WTC11 (cell line): ENCODE measurements at regions of chr1 and their contacts with region 1.

Region 1: GRCh38 chr1:9784508-9785133 is 39.1 kb downstream of the CLSTN1 start:
- DNase-seq: peak; percentile 63
- ATAC-seq: peak; percentile 33; the same call in 1 of the 2 replicates
- H3K4me3 Mint-ChIP-seq: no peak overlapping the region
- H3K27ac Mint-ChIP-seq: no peak overlapping the region
- H3K4me1 Mint-ChIP-seq: peaks cover 19% of the 10 kb centered on the region
- H3K27me3 Mint-ChIP-seq: no peaks in the 10 kb centered on the region
- CTCF ChIP-seq: peak; percentile 48

Region 2: DNA sequence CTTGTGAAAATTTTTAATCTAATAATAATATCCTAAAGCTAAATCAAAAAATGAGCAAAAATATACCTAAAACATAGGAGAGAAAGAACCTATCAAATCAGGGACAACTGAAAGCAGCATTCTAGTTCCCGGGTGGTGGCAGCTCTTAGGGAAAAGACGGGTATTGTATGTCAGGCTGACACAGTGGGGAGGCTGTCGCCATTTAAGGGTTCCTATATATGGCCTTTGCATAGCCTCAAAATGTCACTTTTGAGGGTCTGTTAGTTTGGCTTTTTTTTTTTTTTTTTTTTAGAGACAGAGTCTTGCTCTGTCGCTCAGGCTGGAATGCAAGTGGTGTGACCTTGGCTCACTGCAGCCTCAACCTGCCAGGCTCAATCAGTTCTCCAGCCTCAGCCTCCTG is 33.1 kb after region 1 on chr1:
- CTCF ChIA-PET with region 1: interaction called, 14 read pairs
- POLR2A ChIA-PET with region 1: no interaction called
- DNase-seq: no peak
- ATAC-seq: no peak
- H3K4me3 Mint-ChIP-seq: no peak overlapping the region
- H3K27ac Mint-ChIP-seq: no peak overlapping the region
- H3K4me1 Mint-ChIP-seq: peaks cover 47% of the 10 kb centered on the region
- H3K27me3 Mint-ChIP-seq: 0 out of 2 replicates have a peak, but pooled peaks cover 5% of the 10 kb centered on the region
- CTCF ChIP-seq: no peak

Region 3: DNA sequence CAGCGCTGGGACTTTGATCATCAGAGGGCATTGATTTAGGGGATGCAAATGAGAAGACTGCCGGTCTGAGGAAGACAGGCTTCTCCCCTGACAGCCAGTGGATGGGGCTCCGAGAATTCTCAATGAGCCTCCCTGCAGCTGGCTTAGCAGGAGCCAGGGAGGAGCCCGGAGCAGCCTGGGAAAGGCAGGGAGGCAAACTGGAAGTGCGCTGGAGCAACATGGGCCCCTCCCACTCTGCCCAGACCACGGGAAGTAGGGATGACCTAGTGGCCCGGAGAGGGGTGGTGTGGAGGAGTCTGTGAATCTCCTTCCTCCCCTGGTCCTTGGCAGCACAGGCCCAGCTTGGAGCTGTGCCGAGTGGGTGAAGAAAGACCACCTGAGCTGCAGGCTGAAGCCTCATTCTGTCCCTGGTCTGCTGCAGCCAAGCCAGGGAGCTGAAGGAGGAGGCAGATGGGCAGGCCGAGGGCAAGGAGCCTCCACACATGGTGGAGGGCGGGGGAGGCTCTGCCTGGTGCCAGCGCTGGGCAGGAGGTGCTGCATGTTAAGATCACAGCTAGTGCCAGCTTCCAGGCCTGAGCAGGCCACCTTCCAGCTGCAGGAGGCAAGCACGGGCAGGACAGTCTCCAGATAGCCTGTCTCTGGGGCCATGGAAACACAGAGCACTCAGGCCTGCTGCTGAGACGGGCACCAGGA is 51.3 kb after region 1 on chr1:
- CTCF ChIA-PET with region 1: interaction called, 16 read pairs
- POLR2A ChIA-PET with region 1: no interaction called
- DNase-seq: peak; percentile 73
- ATAC-seq: peak; percentile 93
- H3K4me3 Mint-ChIP-seq: no peak overlapping the region
- H3K27ac Mint-ChIP-seq: peak overlapping the region; percentile 83; the same call in 1 of the 2 replicates
- H3K4me1 Mint-ChIP-seq: peaks cover 10% of the 10 kb centered on the region
- H3K27me3 Mint-ChIP-seq: peaks cover 3% of the 10 kb centered on the region; the same call in 1 of the 2 replicates
- CTCF ChIP-seq: no peak

Region 4: GRCh38 chr1:9861360-9861759 is 76.7 kb after region 1 on chr1:
- CTCF ChIA-PET with region 1: interaction called, 71 read pairs
- POLR2A ChIA-PET with region 1: no interaction called
- DNase-seq: peak; percentile 55
- ATAC-seq: peak; percentile 62
- H3K4me3 Mint-ChIP-seq: no peak overlapping the region
- H3K27ac Mint-ChIP-seq: peak overlapping the region; percentile 57; the same call in 1 of the 2 replicates
- H3K4me1 Mint-ChIP-seq: peaks cover 19% of the 10 kb centered on the region
- H3K27me3 Mint-ChIP-seq: no peaks in the 10 kb centered on the region
- CTCF ChIP-seq: no peak

Region 5: DNA sequence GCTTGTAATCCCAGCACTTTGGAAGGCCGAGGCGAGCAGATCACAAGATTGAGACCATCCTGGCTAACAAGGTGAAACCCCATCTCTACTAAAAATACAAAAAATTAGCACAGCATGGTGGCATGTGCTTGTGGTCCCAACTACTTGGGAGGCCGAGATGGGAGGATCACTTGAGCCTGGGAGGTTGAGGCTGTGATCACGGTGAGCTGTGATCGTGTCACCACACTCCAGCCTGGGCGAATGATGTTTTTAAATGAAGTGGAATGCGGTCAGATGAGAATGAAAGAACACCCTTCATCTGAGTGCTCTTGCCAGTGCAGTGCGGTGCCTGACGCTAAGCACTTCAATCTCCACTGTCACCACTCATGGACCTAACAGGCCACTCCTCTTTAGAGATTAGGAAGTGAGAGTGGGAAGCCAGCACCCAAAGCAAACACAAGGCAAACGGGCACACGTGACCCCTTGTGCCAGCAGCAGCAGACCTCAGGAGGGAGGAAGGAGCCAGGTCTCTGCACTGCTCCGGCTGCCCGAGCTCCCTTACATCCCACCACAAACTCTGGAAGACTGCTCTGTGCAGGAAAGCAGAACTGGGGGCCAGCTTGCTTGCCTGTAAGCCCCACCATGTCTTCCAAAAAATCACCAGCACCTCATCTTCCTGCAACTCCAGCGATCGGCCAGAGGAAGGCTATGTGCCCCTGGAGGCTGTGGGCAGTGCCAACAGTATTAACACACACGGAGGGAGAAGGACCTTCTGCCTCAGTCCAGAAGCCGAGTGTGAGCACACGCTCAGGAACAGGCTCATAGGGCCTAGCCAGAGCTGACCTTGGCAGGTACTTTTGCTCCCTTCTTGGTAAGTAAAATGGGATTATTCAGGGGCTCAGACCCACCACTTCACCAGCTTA is 115.8 kb after region 1 on chr1:
- CTCF ChIA-PET with region 1: no interaction called
- POLR2A ChIA-PET with region 1: no interaction called
- DNase-seq: no peak
- ATAC-seq: no peak
- H3K4me3 Mint-ChIP-seq: no peak overlapping the region
- H3K27ac Mint-ChIP-seq: peak overlapping the region; percentile 64; the same call in 1 of the 2 replicates
- H3K4me1 Mint-ChIP-seq: peaks cover 4% of the 10 kb centered on the region
- H3K27me3 Mint-ChIP-seq: no peaks in the 10 kb centered on the region
- CTCF ChIP-seq: no peak